Activated naive CD4-positive, alpha-beta T cell treated with anti-CD3 and anti-CD28 coated beads for 36 hours (primary cell): ENCODE measurements at regions of chr4 and their contacts with region 1.

Region 1: DNA sequence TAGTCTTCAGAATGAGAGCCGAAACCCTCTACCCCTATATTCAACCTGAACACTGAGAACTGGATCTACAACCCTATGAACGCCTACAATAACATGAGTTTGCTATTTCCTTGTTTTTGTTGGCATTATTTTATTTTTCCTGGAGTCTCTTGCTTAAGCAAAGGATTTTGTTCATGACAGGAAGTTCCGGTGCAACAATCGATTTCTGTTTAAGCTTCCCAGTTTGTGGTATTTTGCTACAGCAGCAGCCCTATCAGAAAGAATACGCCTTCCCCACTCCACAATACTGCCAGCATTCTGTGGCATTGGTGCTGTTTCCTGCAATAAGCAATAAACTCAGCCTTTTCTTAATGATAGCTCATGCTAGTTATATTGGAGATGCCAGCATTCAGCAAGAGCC is 60.9 kb downstream of the NPY5R start:
- DNase-seq: no peak
- H3K4me3 Mint-ChIP-seq: no peak overlapping the region
- H3K27ac Mint-ChIP-seq: no peak overlapping the region
- H3K4me1 Mint-ChIP-seq: no peaks in the 10 kb centered on the region
- H3K27me3 Mint-ChIP-seq: peaks cover under 1% of the 10 kb centered on the region

Region 2: GRCh38 chr4:162263027-162263426 is 1141.6 kb before region 1 on chr4:
- CTCF ChIA-PET with region 1: no interaction called
- intact Hi-C with region 1: no loop called
- DNase-seq: no peak
- H3K4me3 Mint-ChIP-seq: no peak overlapping the region
- H3K27ac Mint-ChIP-seq: no peak overlapping the region
- H3K4me1 Mint-ChIP-seq: no peaks in the 10 kb centered on the region
- H3K27me3 Mint-ChIP-seq: no peaks in the 10 kb centered on the region

Region 3: GRCh38 chr4:163380703-163381102 is 23.9 kb before region 1 on chr4:
- CTCF ChIA-PET with region 1: no interaction called
- intact Hi-C with region 1: no loop called
- DNase-seq: no peak
- H3K4me3 Mint-ChIP-seq: no peak overlapping the region
- H3K27ac Mint-ChIP-seq: no peak overlapping the region
- H3K4me1 Mint-ChIP-seq: no peaks in the 10 kb centered on the region
- H3K27me3 Mint-ChIP-seq: peaks cover 10% of the 10 kb centered on the region

Region 4: GRCh38 chr4:163448516-163449197 is 44.1 kb after region 1 on chr4:
- CTCF ChIA-PET with region 1: no interaction called
- intact Hi-C with region 1: loop called (anchors 1 kb)
- DNase-seq: no peak
- H3K4me3 Mint-ChIP-seq: no peak overlapping the region
- H3K27ac Mint-ChIP-seq: no peak overlapping the region
- H3K4me1 Mint-ChIP-seq: no peaks in the 10 kb centered on the region
- H3K27me3 Mint-ChIP-seq: no peaks in the 10 kb centered on the region

Region 5: DNA sequence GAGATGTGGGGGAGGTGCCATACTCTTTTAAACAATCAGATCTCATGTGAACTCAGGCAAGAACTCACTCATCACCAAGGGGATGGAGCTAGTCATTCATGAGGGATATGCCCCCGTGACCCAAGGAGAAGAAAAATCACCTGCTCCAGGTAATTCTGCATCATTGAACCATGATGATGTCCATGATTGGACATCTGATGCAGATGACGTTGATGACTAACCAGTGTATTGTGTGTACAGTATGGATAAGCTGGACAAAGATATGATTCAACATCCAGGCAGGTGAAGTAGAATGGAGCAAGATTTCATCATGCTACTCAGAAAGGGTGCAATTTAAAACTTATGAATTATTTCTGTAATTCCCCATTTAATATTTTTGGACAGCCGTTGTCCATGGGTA is 1062.9 kb after region 1 on chr4:
- CTCF ChIA-PET with region 1: no interaction called
- intact Hi-C with region 1: no loop called
- DNase-seq: no peak
- H3K4me3 Mint-ChIP-seq: no peak overlapping the region
- H3K27ac Mint-ChIP-seq: no peak overlapping the region
- H3K4me1 Mint-ChIP-seq: no peaks in the 10 kb centered on the region
- H3K27me3 Mint-ChIP-seq: no peaks in the 10 kb centered on the region